Heart left ventricle (tissue), 16 donors: ENCODE measurements at regions of chr2 and their contacts with region 1.

Region 1: DNA sequence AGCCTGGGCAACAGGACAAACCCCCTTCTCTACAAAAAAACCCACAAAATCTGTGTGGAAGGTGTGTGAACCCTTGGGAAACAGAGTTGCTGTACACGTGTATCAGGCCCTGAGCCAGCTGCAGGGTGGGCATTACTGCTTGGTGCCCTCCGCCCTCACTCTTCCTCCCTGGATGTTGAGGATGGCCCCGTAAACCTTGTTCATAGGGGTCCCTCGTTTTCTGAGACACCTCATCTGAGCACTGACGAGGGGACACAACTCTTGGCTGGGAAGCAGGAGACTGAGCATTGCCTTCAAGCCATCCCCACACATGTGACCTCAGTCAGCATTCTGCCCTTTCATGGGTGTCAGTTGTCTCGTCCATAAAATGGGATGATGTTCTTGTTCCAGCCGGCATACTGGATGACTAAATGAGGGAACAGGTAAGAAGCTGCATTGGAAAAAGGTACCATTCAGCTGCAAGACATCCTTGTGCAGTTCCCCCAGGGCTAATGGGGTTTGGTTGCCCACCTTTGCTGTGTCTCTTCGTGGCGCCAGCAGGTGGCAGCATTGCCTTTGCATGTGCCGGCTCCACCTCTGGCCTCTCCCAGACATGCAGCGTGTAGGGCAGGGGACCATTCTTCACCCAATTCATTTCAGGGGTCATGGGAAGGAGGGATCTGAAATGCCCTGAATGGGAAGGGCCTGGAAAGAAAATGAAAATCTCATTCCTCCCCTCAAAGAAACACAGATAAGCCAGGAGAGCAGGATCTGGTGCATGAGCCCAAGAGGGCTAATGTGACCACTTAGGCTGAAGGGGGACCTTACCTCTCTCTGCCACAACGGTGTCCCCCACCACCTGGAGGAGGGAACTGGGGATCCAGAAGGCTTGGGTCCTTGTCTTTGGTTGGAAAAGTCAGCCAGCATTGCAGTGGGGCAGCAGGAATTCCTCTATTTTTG is 36.4 kb upstream of the HAAO start:
- DNase-seq: peak; percentile 74 to 86 (median 81)
- ATAC-seq: peak; percentile 85 to 94 (median 89)
- H3K4me3 ChIP-seq: peak overlapping the region in 2 of 12 donors; percentile 2 to 46
- H3K27ac ChIP-seq: peak overlapping the region in 8 of 12 donors; percentile 3 to 74 (median 46)
- H3K4me1 ChIP-seq: peaks cover 0 to 30% (median 20%) of the 10 kb centered on the region in 12 donors
- H3K27me3 ChIP-seq: no peaks in the 10 kb centered on the region
- CTCF ChIP-seq: peak; percentile 87 to 96 (median 92)
- POLR2A ChIP-seq: no peak

Region 2: DNA sequence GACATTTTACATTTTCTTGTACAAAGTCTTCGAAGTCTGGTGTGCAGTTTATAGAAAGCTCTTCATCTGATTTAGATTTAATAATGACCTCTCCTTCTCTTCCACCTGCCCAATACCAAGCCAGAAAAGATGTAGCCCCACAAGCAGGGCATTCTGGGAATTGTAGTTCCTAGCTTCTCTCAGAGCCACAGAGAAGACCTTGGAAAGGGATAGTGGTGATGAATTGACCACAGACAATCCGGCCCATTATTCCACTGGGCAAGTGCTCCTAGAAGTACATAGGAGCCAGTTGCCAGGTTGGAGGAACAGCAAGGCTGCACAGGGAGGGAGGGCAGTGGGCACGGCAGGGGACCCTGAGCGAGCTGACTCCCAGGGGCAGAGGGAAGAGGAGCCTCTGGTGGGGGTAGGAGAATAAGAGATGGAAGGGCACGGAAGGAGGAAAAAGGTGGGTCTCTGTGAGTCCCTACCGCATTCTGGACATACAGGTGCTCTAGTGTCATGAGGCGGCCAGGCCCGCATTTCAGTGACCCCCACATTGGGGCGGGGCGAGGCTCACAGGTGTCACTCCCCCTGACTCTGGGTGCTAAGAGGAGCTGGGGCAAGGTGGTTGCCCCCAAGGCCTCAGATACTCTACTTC is 116.1 kb after region 1 on chr2:
- intact Hi-C with region 1: loop called in 3 of 10 experiments (anchors 2 to 5 kb)
- DNase-seq: no peak
- ATAC-seq: no peak
- H3K4me3 ChIP-seq: no peak overlapping the region
- H3K27ac ChIP-seq: peak overlapping the region in 1 of 12 donors; percentile 6
- H3K4me1 ChIP-seq: peaks cover 0 to 32% (median 16%) of the 10 kb centered on the region in 12 donors
- H3K27me3 ChIP-seq: no peaks in the 10 kb centered on the region
- CTCF ChIP-seq: no peak
- POLR2A ChIP-seq: no peak

Region 3: GRCh38 chr2:43018179-43019024 is 189.6 kb after region 1 on chr2:
- intact Hi-C with region 1: loop called in 1 of 10 experiments (anchors 2 kb)
- DNase-seq: peak; percentile 73 to 91 (median 87)
- ATAC-seq: peak; percentile 50 to 95 (median 87)
- H3K4me3 ChIP-seq: no peak overlapping the region
- H3K27ac ChIP-seq: peak overlapping the region; percentile 71 to 89 (median 76)
- H3K4me1 ChIP-seq: peaks cover 0 to 30% (median 15%) of the 10 kb centered on the region in 12 donors
- H3K27me3 ChIP-seq: no peaks in the 10 kb centered on the region
- CTCF ChIP-seq: no peak
- POLR2A ChIP-seq: no peak

Region 4: GRCh38 chr2:43495727-43496126 is 667.0 kb after region 1 on chr2:
- intact Hi-C with region 1: loop called in 1 of 10 experiments (anchors 5 kb)
- DNase-seq: no peak
- ATAC-seq: no peak
- H3K4me3 ChIP-seq: no peak overlapping the region
- H3K27ac ChIP-seq: no peak overlapping the region
- H3K4me1 ChIP-seq: peaks cover 0 to 5% (median 0%) of the 10 kb centered on the region in 12 donors
- H3K27me3 ChIP-seq: no peaks in the 10 kb centered on the region
- CTCF ChIP-seq: no peak
- POLR2A ChIP-seq: no peak

Region 5: DNA sequence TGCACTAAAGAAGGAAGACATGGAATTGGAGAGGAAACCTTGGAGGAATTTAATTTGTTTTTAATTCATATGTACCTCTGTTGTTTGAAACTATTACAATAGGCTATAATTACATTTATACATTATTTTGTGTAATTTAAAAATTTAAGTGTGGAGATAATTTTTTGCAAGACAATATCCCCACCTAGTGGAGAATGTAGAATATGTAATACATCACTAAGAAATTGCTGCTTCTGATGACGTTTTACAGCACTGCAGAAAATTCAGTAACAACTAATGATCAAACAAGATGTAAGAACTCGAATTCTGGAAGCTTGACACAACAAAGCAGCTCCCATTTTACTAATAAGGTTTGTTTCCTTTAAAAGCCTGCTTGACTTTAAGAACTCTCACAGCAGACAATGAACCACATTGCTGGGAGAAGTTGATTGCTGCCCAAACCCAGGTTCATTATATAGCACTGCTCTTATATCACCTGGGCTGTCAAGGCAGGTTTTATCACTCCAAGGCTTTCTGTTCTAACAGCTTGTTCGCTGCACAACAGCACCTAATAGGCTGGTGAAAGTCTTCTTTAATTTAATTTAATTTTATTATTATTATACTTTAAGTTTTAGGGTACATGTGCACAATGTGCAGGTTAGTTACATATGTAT is 713.7 kb after region 1 on chr2:
- intact Hi-C with region 1: loop called in 5 of 10 experiments (anchors 2 to 5 kb)
- DNase-seq: no peak
- ATAC-seq: peak in 1 of 4 donors; percentile 33
- H3K4me3 ChIP-seq: no peak overlapping the region
- H3K27ac ChIP-seq: peak overlapping the region in 1 of 12 donors; percentile 62
- H3K4me1 ChIP-seq: peaks cover 0 to 28% (median 2%) of the 10 kb centered on the region in 12 donors
- H3K27me3 ChIP-seq: no peaks in the 10 kb centered on the region
- CTCF ChIP-seq: peak; percentile 50 to 74 (median 60)
- POLR2A ChIP-seq: no peak

Region 6: GRCh38 chr2:43576981-43577892 is 748.5 kb after region 1 on chr2:
- intact Hi-C with region 1: loop called in 8 of 10 experiments (anchors 1 to 10 kb)
- DNase-seq: no peak
- ATAC-seq: peak; percentile 24 to 64 (median 42)
- H3K4me3 ChIP-seq: no peak overlapping the region
- H3K27ac ChIP-seq: peak overlapping the region in 2 of 12 donors; percentile 24 to 40
- H3K4me1 ChIP-seq: peaks cover 0 to 8% (median 0%) of the 10 kb centered on the region in 12 donors
- H3K27me3 ChIP-seq: no peaks in the 10 kb centered on the region
- CTCF ChIP-seq: peak; percentile 60 to 87 (median 76)
- POLR2A ChIP-seq: no peak

Region 7: DNA sequence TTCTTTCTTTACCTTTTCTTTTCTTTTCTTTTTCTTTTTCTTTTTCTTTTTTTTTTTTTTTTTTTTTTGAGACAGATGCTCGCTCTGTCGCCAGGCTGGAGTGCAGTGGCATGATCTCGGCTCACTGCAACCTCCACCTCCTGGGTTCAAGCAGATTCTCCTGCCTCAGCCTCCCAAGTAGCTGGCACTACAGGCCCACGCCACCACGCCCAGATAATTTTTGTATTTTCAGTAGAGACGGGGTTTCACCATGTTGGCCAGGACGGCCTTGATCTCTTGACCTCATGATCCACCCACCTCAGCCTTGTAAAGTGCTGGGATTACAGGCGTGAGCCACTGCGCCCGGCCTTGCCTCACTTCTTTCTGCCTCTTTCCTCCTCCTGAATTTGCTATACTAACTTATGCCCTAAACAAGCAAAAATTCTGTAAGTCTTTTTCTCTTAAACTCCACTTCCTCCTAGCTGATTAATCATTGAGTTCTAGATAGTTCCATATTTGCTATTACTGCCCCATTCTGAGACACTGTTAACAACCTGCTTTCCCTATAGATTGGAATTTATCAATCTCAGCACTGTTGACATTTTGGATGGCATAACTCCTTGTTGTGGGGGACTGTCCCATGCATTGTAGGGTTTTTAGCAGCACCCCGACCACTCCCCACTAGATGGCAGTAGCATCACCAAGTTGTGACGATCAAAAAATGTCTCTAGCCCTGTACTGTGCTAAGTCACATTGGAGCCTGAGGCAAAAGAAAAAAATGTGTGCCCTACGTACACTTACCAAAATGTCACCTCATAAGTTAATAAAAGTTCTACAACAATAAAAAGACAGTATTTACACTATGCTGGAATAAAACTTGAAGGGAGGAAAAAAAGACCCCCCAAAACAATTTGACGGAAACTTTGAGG is 783.5 kb after region 1 on chr2:
- intact Hi-C with region 1: loop called in 4 of 10 experiments (anchors 1 to 10 kb)
- DNase-seq: peak in 4 of 5 donors; percentile 55 to 67 (median 64)
- ATAC-seq: peak; percentile 79 to 93 (median 90)
- H3K4me3 ChIP-seq: no peak overlapping the region
- H3K27ac ChIP-seq: no peak overlapping the region
- H3K4me1 ChIP-seq: peaks cover 0 to 2% (median 0%) of the 10 kb centered on the region in 12 donors
- H3K27me3 ChIP-seq: no peaks in the 10 kb centered on the region
- CTCF ChIP-seq: peak; percentile 71 to 86 (median 77)
- POLR2A ChIP-seq: no peak